Body of pancreas (tissue), 4 donors: ENCODE measurements at regions of chr2 and their contacts with region 1.

Region 1: GRCh38 chr2:47437287-47437686 is 34.3 kb downstream of the MSH2 start:
- DNase-seq: peak in 1 of 4 donors; percentile 6
- ATAC-seq: peak; percentile 35
- H3K4me3 ChIP-seq: no peak overlapping the region
- H3K27ac ChIP-seq: no peak overlapping the region
- H3K4me1 ChIP-seq: no peaks in the 10 kb centered on the region
- H3K27me3 ChIP-seq: no peaks in the 10 kb centered on the region
- CTCF ChIP-seq: peak in 6 of 7 experiments; percentile 25 to 46 (median 44)
- POLR2A ChIP-seq: no peak

Region 2: GRCh38 chr2:47309952-47310800 is 127.1 kb before region 1 on chr2:
- intact Hi-C with region 1: no loop called
- DNase-seq: peak in 1 of 4 donors; percentile 37
- ATAC-seq: peak; percentile 53
- H3K4me3 ChIP-seq: no peak overlapping the region
- H3K27ac ChIP-seq: peak overlapping the region; percentile 63 to 80 (median 75)
- H3K4me1 ChIP-seq: peaks cover 27% of the 10 kb centered on the region
- H3K27me3 ChIP-seq: no peaks in the 10 kb centered on the region
- CTCF ChIP-seq: no peak
- POLR2A ChIP-seq: no peak

Region 3: GRCh38 chr2:47534179-47534919 is 97.1 kb after region 1 on chr2:
- intact Hi-C with region 1: no loop called
- DNase-seq: peak in 2 of 4 donors; percentile 13 to 39
- ATAC-seq: peak; percentile 18
- H3K4me3 ChIP-seq: no peak overlapping the region
- H3K27ac ChIP-seq: no peak overlapping the region
- H3K4me1 ChIP-seq: no peaks in the 10 kb centered on the region
- H3K27me3 ChIP-seq: no peaks in the 10 kb centered on the region
- CTCF ChIP-seq: no peak
- POLR2A ChIP-seq: no peak

Region 4: DNA sequence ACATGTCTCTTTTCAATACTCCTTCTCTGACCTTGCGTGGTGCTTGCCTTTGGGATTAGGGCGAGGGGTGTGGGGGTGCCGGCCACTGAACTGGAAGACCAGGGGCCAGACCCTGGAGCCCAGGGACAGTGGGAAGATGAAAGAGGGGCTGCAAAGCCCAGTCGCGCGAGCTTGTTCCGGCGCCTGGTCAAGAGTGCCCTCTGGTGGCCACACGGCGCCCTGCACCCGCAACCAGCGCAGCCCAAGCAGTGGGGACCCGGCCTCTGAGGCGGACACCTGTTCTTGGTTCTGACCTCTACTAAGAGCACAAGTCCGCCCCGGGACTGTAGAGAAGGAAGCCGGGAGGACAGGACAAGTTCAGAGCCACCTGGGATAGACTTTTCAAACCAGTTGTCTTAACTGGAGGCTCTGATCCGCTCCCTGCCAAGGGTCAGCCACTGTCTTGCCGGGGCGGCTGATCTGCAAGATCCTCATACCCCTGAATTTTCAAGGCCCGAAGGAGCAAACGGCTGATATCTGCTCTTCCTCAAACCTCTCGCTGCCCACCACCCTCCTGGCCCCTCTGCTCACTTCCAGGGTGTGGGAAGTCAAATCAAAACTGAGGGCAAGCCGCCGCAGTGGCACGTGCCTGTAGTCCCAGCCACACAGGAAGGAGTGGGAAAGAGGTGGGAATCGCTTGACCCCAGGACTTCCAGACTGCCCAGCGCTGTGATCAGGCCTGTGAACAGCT is 330.8 kb after region 1 on chr2:
- intact Hi-C with region 1: loop called (anchors 5 kb)
- DNase-seq: peak; percentile 64 to 75 (median 68)
- ATAC-seq: peak; percentile 74
- H3K4me3 ChIP-seq: no peak overlapping the region
- H3K27ac ChIP-seq: no peak overlapping the region
- H3K4me1 ChIP-seq: peaks cover 4% of the 10 kb centered on the region
- H3K27me3 ChIP-seq: no peaks in the 10 kb centered on the region
- CTCF ChIP-seq: peak; percentile 87 to 98 (median 92)
- POLR2A ChIP-seq: no peak